ENCODE measurements at regions of chr5 and their contacts with region 1.

Region 1: GRCh38 chr5:100182402-100182801 is 352.8 kb upstream of the FAM174A start:
- DNase-seq: no peak
- ATAC-seq: no peak
- H3K4me3 ChIP-seq: no peak overlapping the region
- H3K27ac ChIP-seq: no peak overlapping the region
- H3K4me1 ChIP-seq: no peaks in the 10 kb centered on the region
- H3K27me3 ChIP-seq: no peaks in the 10 kb centered on the region
- CTCF ChIP-seq: no peak

Region 2: GRCh38 chr5:100131161-100131560 is 51.2 kb before region 1 on chr5:
- intact Hi-C with region 1: loop called in 1 of 2 experiments (anchors 2 kb)
- DNase-seq: no peak
- ATAC-seq: no peak
- H3K4me3 ChIP-seq: no peak overlapping the region
- H3K27ac ChIP-seq: no peak overlapping the region
- H3K4me1 ChIP-seq: no peaks in the 10 kb centered on the region
- H3K27me3 ChIP-seq: no peaks in the 10 kb centered on the region
- CTCF ChIP-seq: no peak

Measured in left lung (tissue), 14 donors.